Activated T-helper 1 cell treated with anti-CD3 and anti-CD28 coated beads, Interleukin-12 subunit alpha, Interleukin-12 subunit beta, Interleukin-2, Interleukin-4 antibody, amounts not matched to agents 30 ng/mL and 10 ng/mL and 1 ng/mL, durations not matched to agents 14 hours and 24 hours and 36 hours (primary cell): ENCODE measurements at regions of chr2 and their contacts with region 1.

Region 1: GRCh38 chr2:106193977-106194778 is at the start of gene UXS1:
- DNase-seq: peak; percentile 95
- H3K4me3 Mint-ChIP-seq: peak within 1 kb of the TSS; percentile 86
- H3K27ac Mint-ChIP-seq: peak within 1 kb of the TSS; percentile 92
- H3K4me1 Mint-ChIP-seq: peaks cover 46% of the 10 kb centered on the region
- H3K27me3 Mint-ChIP-seq: peaks cover 5% of the 10 kb centered on the region
- total RNA-seq, gene UXS1: 36.7 TPM in 2 replicates

Region 2: GRCh38 chr2:105802587-105802986 is 391.6 kb before region 1 on chr2:
- intact Hi-C with region 1: loop called (anchors 1 kb)
- DNase-seq: peak; percentile 70
- H3K4me3 Mint-ChIP-seq: peak overlapping the region; percentile 58
- H3K27ac Mint-ChIP-seq: peak overlapping the region; percentile 88
- H3K4me1 Mint-ChIP-seq: peaks cover 93% of the 10 kb centered on the region
- H3K27me3 Mint-ChIP-seq: no peaks in the 10 kb centered on the region

Region 3: GRCh38 chr2:106104332-106105062 is 89.7 kb before region 1 on chr2:
- intact Hi-C with region 1: loop called (anchors 1 kb)
- DNase-seq: peak; percentile 62
- H3K4me3 Mint-ChIP-seq: no peak overlapping the region
- H3K27ac Mint-ChIP-seq: peak overlapping the region; percentile 18
- H3K4me1 Mint-ChIP-seq: peaks cover 16% of the 10 kb centered on the region
- H3K27me3 Mint-ChIP-seq: no peaks in the 10 kb centered on the region

Region 4: DNA sequence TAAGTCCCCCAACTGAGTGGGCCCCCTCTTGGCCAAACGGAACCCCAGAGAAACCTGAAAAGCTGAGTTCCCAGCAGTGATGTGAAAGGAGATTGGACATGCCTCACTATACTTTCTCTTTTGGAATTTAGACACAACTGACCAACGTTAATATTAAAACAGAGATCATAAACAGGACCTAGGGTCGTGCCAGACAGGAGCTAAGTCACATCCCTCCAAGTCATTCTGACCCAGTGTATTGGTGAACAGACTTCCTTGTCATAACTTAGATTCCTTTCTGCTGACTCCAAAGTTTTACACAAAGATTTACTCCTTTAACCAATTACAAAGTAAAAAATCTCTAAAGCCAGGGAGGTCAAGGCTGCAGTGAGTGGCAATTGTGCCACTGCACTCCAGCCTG is 47.0 kb before region 1 on chr2:
- intact Hi-C with region 1: loop called (anchors 2 kb)
- DNase-seq: no peak
- H3K4me3 Mint-ChIP-seq: no peak overlapping the region
- H3K27ac Mint-ChIP-seq: peak overlapping the region; percentile 8
- H3K4me1 Mint-ChIP-seq: peaks cover 47% of the 10 kb centered on the region
- H3K27me3 Mint-ChIP-seq: no peaks in the 10 kb centered on the region